ENCODE measurements at regions of chr11 and their contacts with region 1.

Region 1: DNA sequence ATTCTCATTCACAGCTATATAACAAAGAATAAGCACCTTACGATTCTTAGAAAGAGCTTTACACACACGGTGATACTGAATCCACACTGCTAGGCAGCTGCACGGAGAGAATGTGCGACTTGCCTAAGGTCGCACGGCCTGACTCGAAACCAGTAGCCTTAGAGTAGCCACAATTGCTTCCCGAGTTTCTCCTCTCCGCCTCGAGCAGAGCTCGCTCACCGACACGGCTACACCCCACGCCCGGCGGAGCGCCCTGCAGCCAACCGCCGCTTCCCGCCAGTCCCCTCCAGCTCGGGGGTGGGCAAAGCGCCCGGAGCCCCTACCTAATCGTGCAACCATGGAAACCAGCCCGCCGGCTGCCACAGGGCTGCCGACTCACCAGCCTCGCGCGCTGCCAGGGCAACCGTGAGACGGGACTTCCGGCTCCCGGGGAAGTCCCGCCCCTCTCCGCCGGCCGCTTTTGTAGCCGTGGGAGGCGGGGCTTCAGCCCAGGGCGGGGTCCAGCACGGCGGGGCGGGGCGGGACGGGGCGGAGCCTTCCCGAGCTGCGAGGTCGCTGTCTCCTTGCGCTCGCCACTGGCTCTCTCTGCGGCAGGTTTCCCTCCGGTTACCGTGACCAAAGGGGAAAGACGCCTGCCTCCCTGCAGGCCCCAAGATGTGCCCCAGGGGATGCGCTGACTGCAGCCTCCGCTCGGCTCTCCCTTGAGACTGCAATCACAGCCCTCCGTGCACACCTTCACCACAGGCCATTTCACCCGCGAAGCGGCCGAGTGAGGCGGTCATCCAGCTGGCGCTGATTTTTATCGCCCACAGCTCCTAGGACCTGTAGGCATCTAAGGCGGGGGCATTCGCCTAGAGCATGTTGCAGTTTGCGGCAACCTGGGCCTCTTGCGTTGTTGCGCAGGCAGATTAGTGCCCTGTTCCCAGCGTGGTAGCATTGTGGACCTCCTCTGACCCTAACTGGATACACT is 1.1 kb downstream of the BSCL2 start:
- DNase-seq: peak; percentile 91 to 98 (median 96)
- H3K4me3 ChIP-seq: peak overlapping the region; percentile 54 to 99 (median 82)
- H3K27ac ChIP-seq: peak overlapping the region; percentile 72 to 100 (median 96)
- H3K27me3 ChIP-seq: no peaks in the 10 kb centered on the region
- CTCF ChIP-seq: peak in 15 of 56 donors; percentile 3 to 32 (median 22)

Region 2: DNA sequence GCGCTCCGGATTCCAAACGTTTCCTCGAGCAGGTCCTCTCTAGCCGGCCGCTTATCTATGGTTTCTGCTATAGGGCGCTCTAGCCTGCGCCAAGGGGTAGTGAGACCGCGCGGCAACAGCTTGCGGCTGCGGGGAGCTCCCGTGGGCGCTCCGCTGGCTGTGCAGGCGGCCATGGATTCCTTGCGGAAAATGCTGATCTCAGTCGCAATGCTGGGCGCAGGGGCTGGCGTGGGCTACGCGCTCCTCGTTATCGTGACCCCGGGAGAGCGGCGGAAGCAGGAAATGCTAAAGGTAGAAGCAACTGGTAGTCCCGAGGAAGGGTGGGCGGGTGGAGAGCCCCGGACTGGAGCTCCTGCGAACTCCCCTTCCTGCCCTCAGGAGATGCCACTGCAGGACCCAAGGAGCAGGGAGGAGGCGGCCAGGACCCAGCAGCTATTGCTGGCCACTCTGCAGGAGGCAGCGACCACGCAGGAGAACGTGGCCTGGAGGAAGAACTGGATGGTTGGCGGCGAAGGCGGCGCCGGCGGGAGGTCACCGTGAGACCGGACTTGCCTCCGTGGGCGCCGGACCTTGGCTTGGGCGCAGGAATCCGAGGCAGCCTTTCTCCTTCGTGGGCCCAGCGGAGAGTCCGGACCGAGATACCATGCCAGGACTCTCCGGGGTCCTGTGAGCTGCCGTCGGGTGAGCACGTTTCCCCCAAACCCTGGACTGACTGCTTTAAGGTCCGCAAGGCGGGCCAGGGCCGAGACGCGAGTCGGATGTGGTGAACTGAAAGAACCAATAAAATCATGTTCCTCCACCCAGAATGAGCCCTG is 34.4 kb before region 1 on chr11 and contains the starts of genes LBHD1 and UQCC3:
- intact Hi-C with region 1: loop called in 1 of 2 experiments (anchors 5 kb)
- DNase-seq: peak; percentile 60 to 87 (median 83)
- H3K4me3 ChIP-seq: peak within 1 kb of the TSS; percentile 53 to 99 (median 79)
- H3K27ac ChIP-seq: peak within 1 kb of the TSS; percentile 44 to 97 (median 92)
- H3K27me3 ChIP-seq: no peaks in the 10 kb centered on the region
- CTCF ChIP-seq: peak in 23 of 56 donors; percentile 10 to 50 (median 21)
- total RNA-seq, gene LBHD1: 1.5 to 11.0 (median 4.6) TPM
- total RNA-seq, gene UQCC3: 3.8 to 9.7 (median 6.4) TPM